WTC11 (cell line): ENCODE measurements at regions of chr20 and their contacts with region 1.

Region 1: DNA sequence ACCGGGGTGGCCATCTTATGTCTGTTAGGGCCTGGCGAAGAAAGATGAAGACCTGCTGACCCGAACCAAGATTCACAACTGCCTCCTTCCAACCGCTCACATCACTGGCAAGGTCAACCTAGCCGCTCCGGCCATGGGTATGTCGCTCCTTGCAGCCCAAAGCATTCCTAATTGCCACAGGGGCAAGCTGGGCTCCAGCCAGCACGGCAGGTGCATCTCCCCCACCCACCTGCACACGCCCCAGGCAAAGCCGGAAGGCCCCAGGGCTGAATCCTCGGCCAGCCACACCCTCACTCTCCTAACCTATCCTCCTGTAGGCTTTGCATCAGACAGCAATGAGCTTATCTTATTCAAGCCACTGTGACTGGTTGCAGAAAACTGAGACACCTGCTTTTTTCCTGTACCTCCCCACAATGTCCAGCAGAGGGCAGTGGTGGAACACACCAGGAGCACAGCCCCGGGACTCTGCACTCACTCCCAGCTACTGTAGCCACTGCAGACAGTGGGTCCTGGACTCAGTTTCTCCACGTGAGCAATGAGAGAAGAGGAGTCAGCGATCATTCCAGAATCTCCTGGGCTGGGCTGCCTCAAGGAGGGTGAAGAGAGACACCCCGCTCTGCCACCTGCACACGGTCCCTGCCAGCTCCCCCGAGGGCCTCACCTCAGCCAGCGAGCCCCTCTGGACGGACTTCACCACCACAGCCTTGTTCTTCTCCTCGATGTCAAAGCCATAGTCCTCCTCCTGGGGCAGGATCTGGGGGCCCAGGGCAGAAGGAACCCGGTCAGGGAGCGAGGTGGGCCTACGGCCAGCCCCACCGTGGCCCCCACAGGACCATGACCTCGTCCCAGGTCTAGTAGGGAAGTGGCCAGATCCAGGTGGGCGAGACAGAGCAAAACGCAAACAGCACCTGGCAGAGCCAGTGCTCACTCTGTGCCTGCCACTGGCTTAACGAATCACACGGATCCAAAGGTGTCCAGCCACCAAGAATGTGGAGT is 170.0 kb downstream of the PREX1 start:
- DNase-seq: peak; percentile 65
- ATAC-seq: peak; percentile 85
- H3K4me3 Mint-ChIP-seq: no peak overlapping the region
- H3K27ac Mint-ChIP-seq: no peak overlapping the region; the same call in 1 of the 2 replicates
- H3K4me1 Mint-ChIP-seq: 0 out of 2 replicates have a peak, but pooled peaks cover 4% of the 10 kb centered on the region
- H3K27me3 Mint-ChIP-seq: no peaks in the 10 kb centered on the region
- CTCF ChIP-seq: peak; percentile 94

Region 2: GRCh38 chr20:48319960-48320584 is 337.7 kb before region 1 on chr20:
- CTCF ChIA-PET with region 1: no interaction called
- POLR2A ChIA-PET with region 1: no interaction called
- DNase-seq: no peak
- ATAC-seq: no peak
- H3K4me3 Mint-ChIP-seq: no peak overlapping the region
- H3K27ac Mint-ChIP-seq: peak overlapping the region; percentile 82; the same call in 1 of the 2 replicates
- H3K4me1 Mint-ChIP-seq: peaks cover 18% of the 10 kb centered on the region
- H3K27me3 Mint-ChIP-seq: peaks cover 4% of the 10 kb centered on the region
- CTCF ChIP-seq: no peak

Region 3: GRCh38 chr20:48489656-48490055 is 168.1 kb before region 1 on chr20:
- CTCF ChIA-PET with region 1: no interaction called
- POLR2A ChIA-PET with region 1: no interaction called
- DNase-seq: no peak
- ATAC-seq: no peak
- H3K4me3 Mint-ChIP-seq: no peak overlapping the region
- H3K27ac Mint-ChIP-seq: no peak overlapping the region
- H3K4me1 Mint-ChIP-seq: peaks cover 6% of the 10 kb centered on the region
- H3K27me3 Mint-ChIP-seq: no peaks in the 10 kb centered on the region
- CTCF ChIP-seq: no peak

Region 4: GRCh38 chr20:48668451-48668952 is 10.7 kb after region 1 on chr20:
- CTCF ChIA-PET with region 1: interaction called, 24 read pairs
- POLR2A ChIA-PET with region 1: no interaction called
- DNase-seq: no peak
- ATAC-seq: no peak
- H3K4me3 Mint-ChIP-seq: no peak overlapping the region
- H3K27ac Mint-ChIP-seq: no peak overlapping the region
- H3K4me1 Mint-ChIP-seq: no peaks in the 10 kb centered on the region
- H3K27me3 Mint-ChIP-seq: no peaks in the 10 kb centered on the region
- CTCF ChIP-seq: no peak

Region 5: DNA sequence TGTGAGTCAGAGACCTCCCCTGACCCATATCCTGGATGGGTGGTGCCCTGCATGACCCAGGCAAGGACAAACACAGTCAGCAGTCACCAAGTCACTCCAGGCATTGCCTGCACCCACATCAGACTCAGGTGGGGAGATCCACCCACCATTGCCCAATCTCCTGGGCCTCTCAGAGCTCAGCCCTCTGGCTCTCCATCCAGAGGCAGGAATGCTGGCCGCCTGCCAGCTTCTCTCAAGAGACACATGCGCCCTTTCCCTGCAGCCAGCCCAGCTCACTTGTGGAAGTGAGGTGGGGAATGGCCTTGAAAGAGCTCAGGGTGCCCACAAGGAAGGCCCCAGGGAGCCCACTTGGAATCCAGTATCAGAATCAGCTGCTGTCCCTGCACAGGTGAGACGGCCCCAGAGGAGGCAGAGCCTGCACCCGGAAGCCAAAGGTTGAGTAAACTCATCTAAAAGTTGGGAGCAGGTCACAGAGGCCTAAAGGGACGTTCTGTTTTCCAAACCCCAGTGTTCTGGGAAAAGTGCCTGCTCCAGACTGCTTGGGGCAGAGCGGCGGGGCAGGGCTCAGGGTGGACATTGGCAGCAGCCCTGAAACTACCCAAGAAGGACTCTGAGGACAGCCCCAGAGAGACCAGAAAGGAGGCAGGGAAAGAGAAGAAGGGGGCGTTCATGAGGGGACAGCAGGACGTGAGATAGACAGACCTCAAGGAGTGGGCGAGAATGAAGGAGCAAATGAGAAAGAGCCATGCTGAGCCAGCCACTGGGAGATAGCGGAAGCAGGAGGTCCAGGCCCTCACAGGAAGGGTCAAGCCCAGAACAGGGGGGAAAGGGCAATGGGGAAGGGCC is 40.3 kb after region 1 on chr20:
- CTCF ChIA-PET with region 1: interaction called, 97 read pairs
- POLR2A ChIA-PET with region 1: interaction called, 4 read pairs
- DNase-seq: no peak
- ATAC-seq: no peak
- H3K4me3 Mint-ChIP-seq: no peak overlapping the region
- H3K27ac Mint-ChIP-seq: no peak overlapping the region
- H3K4me1 Mint-ChIP-seq: peaks cover 12% of the 10 kb centered on the region
- H3K27me3 Mint-ChIP-seq: no peaks in the 10 kb centered on the region
- CTCF ChIP-seq: no peak

Region 6: GRCh38 chr20:48750947-48751635 is 93.3 kb after region 1 on chr20:
- CTCF ChIA-PET with region 1: interaction called, 26 read pairs
- POLR2A ChIA-PET with region 1: no interaction called
- DNase-seq: peak; percentile 76
- ATAC-seq: peak; percentile 83
- H3K4me3 Mint-ChIP-seq: no peak overlapping the region
- H3K27ac Mint-ChIP-seq: peak overlapping the region; percentile 69
- H3K4me1 Mint-ChIP-seq: peaks cover 82% of the 10 kb centered on the region
- H3K27me3 Mint-ChIP-seq: no peaks in the 10 kb centered on the region
- CTCF ChIP-seq: no peak

Region 7: GRCh38 chr20:48828022-48828743 is 170.4 kb after region 1 on chr20:
- CTCF ChIA-PET with region 1: interaction called, 57 read pairs
- POLR2A ChIA-PET with region 1: no interaction called
- DNase-seq: peak; percentile 81
- ATAC-seq: peak; percentile 54
- H3K4me3 Mint-ChIP-seq: peak overlapping the region; percentile 90
- H3K27ac Mint-ChIP-seq: no peak overlapping the region
- H3K4me1 Mint-ChIP-seq: peaks cover 29% of the 10 kb centered on the region
- H3K27me3 Mint-ChIP-seq: peaks cover 59% of the 10 kb centered on the region
- CTCF ChIP-seq: no peak

Region 8: GRCh38 chr20:48897246-48897994 is 239.6 kb after region 1 on chr20:
- CTCF ChIA-PET with region 1: interaction called, 27 read pairs
- POLR2A ChIA-PET with region 1: no interaction called
- DNase-seq: no peak
- ATAC-seq: no peak
- H3K4me3 Mint-ChIP-seq: no peak overlapping the region
- H3K27ac Mint-ChIP-seq: no peak overlapping the region
- H3K4me1 Mint-ChIP-seq: peaks cover 8% of the 10 kb centered on the region
- H3K27me3 Mint-ChIP-seq: no peaks in the 10 kb centered on the region; the same call in 1 of the 2 replicates
- CTCF ChIP-seq: no peak

Region 9: GRCh38 chr20:48945851-48946514 is 288.2 kb after region 1 on chr20:
- CTCF ChIA-PET with region 1: interaction called, 31 read pairs
- POLR2A ChIA-PET with region 1: no interaction called
- DNase-seq: no peak
- ATAC-seq: no peak
- H3K4me3 Mint-ChIP-seq: no peak overlapping the region
- H3K27ac Mint-ChIP-seq: no peak overlapping the region
- H3K4me1 Mint-ChIP-seq: peaks cover 9% of the 10 kb centered on the region; the same call in 1 of the 2 replicates
- H3K27me3 Mint-ChIP-seq: no peaks in the 10 kb centered on the region
- CTCF ChIP-seq: no peak